Heart left ventricle (tissue), 16 donors: ENCODE measurements at regions of chr18 and their contacts with region 1.

Region 1: GRCh38 chr18:63320046-63320689 is 599 bp upstream of the BCL2 start:
- DNase-seq: peak; percentile 86 to 91 (median 89)
- ATAC-seq: peak; percentile 81 to 90 (median 84)
- H3K4me3 ChIP-seq: peak overlapping the region in 11 of 12 donors; percentile 65 to 92 (median 73)
- H3K27ac ChIP-seq: peak overlapping the region in 11 of 12 donors; percentile 52 to 89 (median 83)
- H3K4me1 ChIP-seq: peaks cover 0 to 50% (median 26%) of the 10 kb centered on the region in 12 donors
- H3K27me3 ChIP-seq: peaks cover 0 to 11% (median 0%) of the 10 kb centered on the region in 9 donors
- CTCF ChIP-seq: peak in 1 of 12 donors; percentile 24
- POLR2A ChIP-seq: no peak

Region 2: GRCh38 chr18:63016270-63016669 is 303.9 kb before region 1 on chr18:
- intact Hi-C with region 1: loop called (anchors 1 to 5 kb)
- DNase-seq: peak in 2 of 5 donors; percentile 38 to 42
- ATAC-seq: peak in 3 of 4 donors; percentile 58 to 72 (median 65)
- H3K4me3 ChIP-seq: no peak overlapping the region
- H3K27ac ChIP-seq: no peak overlapping the region
- H3K4me1 ChIP-seq: no peaks in the 10 kb centered on the region
- H3K27me3 ChIP-seq: peaks cover 0 to 9% (median 0%) of the 10 kb centered on the region in 9 donors
- CTCF ChIP-seq: peak; percentile 65 to 89 (median 82)
- POLR2A ChIP-seq: no peak

Region 3: DNA sequence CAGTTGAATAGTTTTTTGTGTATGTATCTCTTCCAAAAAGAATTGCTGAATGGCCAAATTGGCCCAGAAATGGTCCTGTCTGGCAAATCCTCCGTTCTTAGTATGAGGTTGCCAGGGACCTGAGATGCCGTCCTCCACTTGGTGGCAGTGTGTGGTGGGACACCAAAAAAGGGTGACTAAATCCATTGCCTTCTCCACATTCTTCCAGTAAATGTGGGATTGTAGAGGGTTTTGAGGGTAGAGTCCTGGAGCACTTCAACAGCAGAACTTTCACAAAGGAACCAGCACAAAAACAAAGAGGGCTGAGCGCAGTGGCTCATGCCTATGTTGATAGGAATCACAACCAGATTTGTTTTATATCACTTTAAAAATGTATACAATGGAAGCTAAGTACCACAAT is 200.5 kb before region 1 on chr18:
- intact Hi-C with region 1: loop called in 1 of 10 experiments (anchors 5 kb)
- DNase-seq: peak in 2 of 5 donors; percentile 33 to 37
- ATAC-seq: peak in 3 of 4 donors; percentile 55 to 68 (median 64)
- H3K4me3 ChIP-seq: no peak overlapping the region
- H3K27ac ChIP-seq: no peak overlapping the region
- H3K4me1 ChIP-seq: peaks cover 0 to 14% (median 4%) of the 10 kb centered on the region in 12 donors
- H3K27me3 ChIP-seq: no peaks in the 10 kb centered on the region
- CTCF ChIP-seq: peak; percentile 11 to 67 (median 49)
- POLR2A ChIP-seq: no peak

Region 4: GRCh38 chr18:63155169-63155852 is 164.9 kb before region 1 on chr18:
- intact Hi-C with region 1: loop called in 1 of 10 experiments (anchors 10 kb)
- DNase-seq: peak; percentile 58 to 74 (median 71)
- ATAC-seq: peak; percentile 64 to 91 (median 85)
- H3K4me3 ChIP-seq: peak overlapping the region in 9 of 12 donors; percentile 16 to 47 (median 40)
- H3K27ac ChIP-seq: peak overlapping the region in 2 of 12 donors; percentile 26 to 72
- H3K4me1 ChIP-seq: peaks cover 0 to 49% (median 6%) of the 10 kb centered on the region in 12 donors
- H3K27me3 ChIP-seq: no peaks in the 10 kb centered on the region
- CTCF ChIP-seq: peak; percentile 64 to 86 (median 74)
- POLR2A ChIP-seq: no peak

Region 5: GRCh38 chr18:63262369-63263335 is 57.5 kb before region 1 on chr18:
- intact Hi-C with region 1: loop called in 3 of 10 experiments (anchors 5 to 10 kb)
- DNase-seq: peak in 3 of 5 donors; percentile 25 to 47 (median 33)
- ATAC-seq: peak; percentile 61 to 85 (median 83)
- H3K4me3 ChIP-seq: no peak overlapping the region
- H3K27ac ChIP-seq: peak overlapping the region in 11 of 12 donors; percentile 1 to 74 (median 52)
- H3K4me1 ChIP-seq: peaks cover 0 to 21% (median 10%) of the 10 kb centered on the region in 12 donors
- H3K27me3 ChIP-seq: no peaks in the 10 kb centered on the region
- CTCF ChIP-seq: peak in 6 of 12 donors; percentile 9 to 51 (median 23)
- POLR2A ChIP-seq: no peak

Region 6: DNA sequence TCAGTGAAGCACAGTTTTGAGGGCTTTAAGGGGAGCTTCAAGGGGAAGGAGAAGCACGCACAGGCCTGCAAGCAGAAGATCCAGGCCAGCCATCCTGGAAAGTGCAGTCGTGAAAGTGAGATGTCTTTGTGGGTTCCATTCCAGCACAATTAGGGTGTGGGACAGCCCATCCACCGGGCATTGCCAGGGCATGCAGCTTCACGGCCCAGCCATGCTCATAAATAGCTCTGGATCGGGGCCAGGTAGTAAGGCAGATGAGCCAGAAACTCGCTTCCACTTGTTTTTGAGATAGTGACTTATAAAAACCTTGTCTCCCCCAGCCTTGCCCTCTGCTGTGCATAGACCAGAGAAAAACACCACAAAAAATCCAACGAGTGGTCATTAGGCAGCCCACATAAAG is 25.9 kb after region 1 on chr18:
- intact Hi-C with region 1: no loop called
- DNase-seq: peak in 4 of 5 donors; percentile 53 to 66 (median 60)
- ATAC-seq: peak; percentile 83 to 87 (median 84)
- H3K4me3 ChIP-seq: no peak overlapping the region
- H3K27ac ChIP-seq: peak overlapping the region in 11 of 12 donors; percentile 40 to 81 (median 57)
- H3K4me1 ChIP-seq: peaks cover 0 to 30% (median 15%) of the 10 kb centered on the region in 12 donors
- H3K27me3 ChIP-seq: no peaks in the 10 kb centered on the region
- CTCF ChIP-seq: no peak
- POLR2A ChIP-seq: no peak